OCI-LY7 (cell line): ENCODE measurements at regions of chr3 and their contacts with region 1.

Region 1: DNA sequence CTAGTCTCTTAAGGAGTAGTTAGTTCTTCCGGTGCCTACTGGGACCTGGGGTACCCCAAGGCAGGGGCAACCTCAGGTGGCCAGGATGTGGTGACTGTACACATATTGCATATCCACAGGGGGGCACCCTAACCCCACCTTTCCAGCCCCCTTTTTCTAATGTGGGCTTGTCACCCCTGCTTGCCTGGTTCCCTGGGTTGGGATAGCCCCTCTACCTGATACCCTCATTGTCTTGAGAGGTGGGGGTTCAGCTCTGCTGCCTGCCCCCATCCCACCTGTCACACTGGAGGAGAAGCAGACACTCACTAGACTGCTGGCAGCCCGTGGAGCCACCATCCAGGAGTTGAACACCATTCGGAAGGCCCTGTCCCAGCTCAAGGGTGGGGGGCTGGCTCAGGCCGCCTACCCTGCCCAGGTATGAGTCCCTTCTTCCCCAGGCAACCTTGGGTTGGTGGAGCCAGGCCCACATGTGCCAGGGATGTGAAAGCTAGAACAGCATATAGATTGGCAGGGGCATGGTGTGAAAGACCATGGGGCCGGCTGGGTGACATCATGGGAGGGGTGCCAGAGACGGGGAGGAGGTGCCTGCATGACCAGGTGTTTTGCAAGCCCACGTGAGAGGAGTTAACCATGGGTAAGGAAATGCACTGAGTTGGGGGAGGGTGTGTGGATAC is 4.0 kb downstream of the GLYCTK start:
- DNase-seq: peak; percentile 71
- H3K4me3 ChIP-seq: no peak overlapping the region
- H3K27ac ChIP-seq: no peak overlapping the region
- H3K4me1 ChIP-seq: peaks cover 18% of the 10 kb centered on the region
- CTCF ChIP-seq: peak; percentile 89

Region 2: GRCh38 chr3:52385157-52385556 is 93.5 kb after region 1 on chr3:
- CTCF ChIA-PET with region 1: interaction called, 4 read pairs
- POLR2A ChIA-PET with region 1: no interaction called
- intact Hi-C with region 1: loop called (anchors 1 kb)
- DNase-seq: peak; percentile 82
- H3K4me3 ChIP-seq: no peak overlapping the region
- H3K27ac ChIP-seq: no peak overlapping the region
- H3K4me1 ChIP-seq: no peaks in the 10 kb centered on the region
- CTCF ChIP-seq: peak; percentile 90